Body of pancreas (tissue), 4 donors: ENCODE measurements at regions of chr22 and their contacts with region 1.

Region 1: DNA sequence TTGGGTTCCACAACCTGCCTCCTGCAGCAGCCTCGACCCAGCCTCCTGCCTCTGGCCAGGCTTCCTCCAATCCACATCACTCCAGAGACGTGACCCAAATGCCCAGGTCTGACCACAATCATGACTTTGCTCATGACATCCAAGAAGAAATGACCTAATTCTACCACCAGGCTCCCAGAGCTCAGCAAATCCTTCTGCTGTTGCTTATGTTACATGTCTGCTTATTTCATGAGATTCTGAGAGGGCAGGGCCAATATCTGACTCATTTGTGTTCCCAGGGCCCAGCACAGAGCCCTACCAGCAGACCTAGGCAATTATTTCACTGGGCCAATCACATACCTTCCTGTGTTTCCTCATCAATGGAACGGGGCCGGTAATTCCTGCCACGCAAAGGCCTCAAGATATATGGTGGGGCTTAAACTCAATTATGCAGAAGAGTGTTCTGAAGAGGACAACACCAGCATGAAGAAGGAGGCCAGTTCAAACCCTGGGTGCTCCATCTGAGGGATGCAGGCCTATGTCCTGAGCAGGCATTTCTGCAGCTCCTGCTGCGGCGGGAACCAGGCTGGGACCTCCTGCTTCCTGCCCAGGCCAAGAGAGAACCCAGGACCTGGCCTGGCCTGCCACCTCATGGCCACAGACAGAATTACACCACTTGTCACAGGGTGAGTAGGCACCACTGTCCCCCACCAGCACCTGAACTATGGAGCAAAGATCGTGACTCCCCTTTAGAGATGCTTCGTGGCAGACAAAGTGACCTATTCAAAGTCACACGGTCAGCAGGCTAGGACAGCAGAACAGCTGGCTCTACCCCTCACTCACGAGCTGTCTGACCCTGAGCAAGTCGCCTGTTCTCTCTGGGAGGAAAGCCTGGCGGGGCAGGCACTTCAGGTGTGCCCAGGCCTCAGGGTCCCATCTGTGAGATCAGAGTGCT is 5.9 kb downstream of the CENPM start:
- DNase-seq: peak; percentile 87 to 90 (median 88)
- ATAC-seq: peak; percentile 90
- H3K4me3 ChIP-seq: no peak overlapping the region
- H3K27ac ChIP-seq: peak overlapping the region in 1 of 4 donors; percentile 22
- H3K4me1 ChIP-seq: peaks cover 12% of the 10 kb centered on the region
- H3K27me3 ChIP-seq: no peaks in the 10 kb centered on the region
- CTCF ChIP-seq: peak; percentile 79 to 97 (median 96)
- POLR2A ChIP-seq: no peak

Region 2: GRCh38 chr22:41746567-41747400 is 194.3 kb before region 1 on chr22:
- intact Hi-C with region 1: loop called (anchors 5 kb)
- DNase-seq: peak; percentile 76 to 83 (median 80)
- ATAC-seq: peak; percentile 93
- H3K4me3 ChIP-seq: no peak overlapping the region
- H3K27ac ChIP-seq: no peak overlapping the region
- H3K4me1 ChIP-seq: no peaks in the 10 kb centered on the region
- H3K27me3 ChIP-seq: no peaks in the 10 kb centered on the region
- CTCF ChIP-seq: peak; percentile 48 to 75 (median 69)
- POLR2A ChIP-seq: no peak

Region 3: GRCh38 chr22:41822317-41823060 is 118.6 kb before region 1 on chr22:
- intact Hi-C with region 1: loop called (anchors 5 kb)
- DNase-seq: peak in 1 of 4 donors; percentile 37
- ATAC-seq: peak; percentile 47
- H3K4me3 ChIP-seq: no peak overlapping the region
- H3K27ac ChIP-seq: no peak overlapping the region
- H3K4me1 ChIP-seq: peaks cover 26% of the 10 kb centered on the region
- H3K27me3 ChIP-seq: no peaks in the 10 kb centered on the region
- CTCF ChIP-seq: peak; percentile 24 to 74 (median 63)
- POLR2A ChIP-seq: no peak

Region 4: DNA sequence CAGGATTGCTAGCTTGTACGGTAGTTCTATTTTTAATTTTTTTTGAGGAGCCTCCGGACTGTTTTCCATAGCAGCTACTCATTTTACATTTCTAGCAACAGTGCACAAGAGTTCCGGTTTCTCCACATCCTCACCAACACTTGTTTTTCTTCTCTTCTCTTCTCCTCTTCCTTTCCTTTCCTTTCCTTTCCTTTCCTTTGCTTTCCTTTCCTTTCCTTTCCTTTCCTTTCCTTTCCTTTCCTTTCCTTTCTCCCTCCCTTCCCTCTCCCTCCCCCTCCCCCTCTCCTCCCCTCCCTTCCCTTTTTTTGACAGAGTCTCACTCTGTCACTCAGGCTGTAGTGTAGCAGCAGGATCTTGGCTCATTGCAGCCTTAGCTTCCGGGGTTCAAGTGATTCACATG is 66.8 kb after region 1 on chr22:
- intact Hi-C with region 1: no loop called
- DNase-seq: no peak
- ATAC-seq: no peak
- H3K4me3 ChIP-seq: no peak overlapping the region
- H3K27ac ChIP-seq: no peak overlapping the region
- H3K4me1 ChIP-seq: no peaks in the 10 kb centered on the region
- H3K27me3 ChIP-seq: no peaks in the 10 kb centered on the region
- CTCF ChIP-seq: no peak
- POLR2A ChIP-seq: no peak